IMR-90 (cell line): ENCODE measurements at regions of chr1 and their contacts with region 1.

Region 1: DNA sequence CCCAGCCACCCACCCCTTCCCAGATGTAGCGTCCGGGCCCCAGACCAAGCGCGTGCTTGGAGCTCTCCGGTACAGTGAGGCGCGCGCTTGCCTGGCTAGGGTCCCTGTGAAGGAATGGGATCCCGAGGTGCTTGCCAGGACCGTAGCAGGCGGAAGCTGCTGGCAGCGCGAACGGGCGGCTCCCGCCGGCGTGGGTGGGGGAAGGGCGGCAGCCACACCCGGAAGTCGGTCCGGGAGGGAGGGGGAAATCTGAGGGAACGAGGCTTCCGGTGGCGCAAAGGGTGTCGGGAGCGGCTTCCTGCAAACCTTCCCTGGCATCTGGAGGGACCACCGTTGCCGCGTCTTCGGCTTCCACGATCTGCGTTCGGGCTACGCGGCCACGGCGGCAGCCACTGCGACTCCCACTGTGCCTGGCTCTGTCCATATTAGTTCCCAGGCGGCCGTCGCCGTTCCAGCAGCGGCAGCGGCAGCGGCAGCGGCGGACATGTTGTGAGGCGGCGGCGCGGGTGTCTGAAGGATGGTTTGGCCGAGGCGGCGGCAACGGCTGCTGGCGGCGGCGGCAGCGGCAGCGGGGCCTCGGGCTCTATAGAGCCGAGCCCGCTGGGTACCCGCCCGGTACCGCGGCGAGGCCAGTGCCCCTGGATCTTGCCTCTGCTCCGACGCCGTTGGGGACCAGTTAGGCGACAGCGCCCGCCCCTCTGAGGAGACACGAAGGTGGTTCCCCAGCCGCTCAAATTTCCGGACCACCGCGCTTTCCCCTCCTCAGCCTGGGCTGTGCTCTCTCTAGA is at the start of gene DR1:
- DNase-seq: peak; percentile 95
- ATAC-seq: peak; percentile 90
- H3K4me3 ChIP-seq: peak within 1 kb of the TSS; percentile 83
- H3K27ac ChIP-seq: peak within 1 kb of the TSS; percentile 93
- H3K4me1 ChIP-seq: peaks cover 3% of the 10 kb centered on the region; the same call in 1 of the 2 replicates
- H3K27me3 ChIP-seq: no peaks in the 10 kb centered on the region
- CTCF ChIP-seq: no peak
- POLR2A ChIP-seq: peak; percentile 91
- RAD21 ChIP-seq: no peak
- total RNA-seq, gene DR1: 39.4 and 46.9 TPM in 2 replicates

Region 2: GRCh38 chr1:93078986-93079654 is 266.7 kb before region 1 on chr1 and contains the start of gene MTF2:
- CTCF ChIA-PET with region 1: no interaction called
- POLR2A ChIA-PET with region 1: no interaction called
- dilution Hi-C with region 1: no loop called
- in situ Hi-C with region 1: no loop called
- intact Hi-C with region 1: loop called (anchors 1 kb)
- DNase-seq: peak; percentile 97
- ATAC-seq: peak; percentile 88
- H3K4me3 ChIP-seq: peak within 1 kb of the TSS; percentile 78
- H3K27ac ChIP-seq: peak within 1 kb of the TSS; percentile 77
- H3K4me1 ChIP-seq: no peaks in the 10 kb centered on the region
- H3K27me3 ChIP-seq: no peaks in the 10 kb centered on the region; the same call in 1 of the 2 replicates
- CTCF ChIP-seq: no peak
- POLR2A ChIP-seq: peak; percentile 91
- RAD21 ChIP-seq: 0 out of 2 replicates have a peak, but pooled peaks have one; percentile 3
- total RNA-seq, gene MTF2: 33.3 and 39.8 TPM in 2 replicates

Region 3: GRCh38 chr1:93324486-93325464 is 21.1 kb before region 1 on chr1:
- CTCF ChIA-PET with region 1: interaction called, 3 read pairs
- POLR2A ChIA-PET with region 1: interaction called, 10 read pairs
- dilution Hi-C with region 1: no loop called
- in situ Hi-C with region 1: no loop called
- intact Hi-C with region 1: no loop called
- DNase-seq: peak; percentile 81
- ATAC-seq: peak; percentile 66
- H3K4me3 ChIP-seq: no peak overlapping the region
- H3K27ac ChIP-seq: no peak overlapping the region
- H3K4me1 ChIP-seq: peaks cover 5% of the 10 kb centered on the region
- H3K27me3 ChIP-seq: no peaks in the 10 kb centered on the region
- CTCF ChIP-seq: no peak
- POLR2A ChIP-seq: no peak
- RAD21 ChIP-seq: no peak